Head of caudate nucleus (tissue), 42 donors: ENCODE measurements at regions of chr6 and their contacts with region 1.

Region 1: GRCh38 chr6:100479179-100480035 is 14.7 kb upstream of the SIM1 start:
- DNase-seq: peak in 2 of 42 donors; percentile 17 to 30

Region 2: DNA sequence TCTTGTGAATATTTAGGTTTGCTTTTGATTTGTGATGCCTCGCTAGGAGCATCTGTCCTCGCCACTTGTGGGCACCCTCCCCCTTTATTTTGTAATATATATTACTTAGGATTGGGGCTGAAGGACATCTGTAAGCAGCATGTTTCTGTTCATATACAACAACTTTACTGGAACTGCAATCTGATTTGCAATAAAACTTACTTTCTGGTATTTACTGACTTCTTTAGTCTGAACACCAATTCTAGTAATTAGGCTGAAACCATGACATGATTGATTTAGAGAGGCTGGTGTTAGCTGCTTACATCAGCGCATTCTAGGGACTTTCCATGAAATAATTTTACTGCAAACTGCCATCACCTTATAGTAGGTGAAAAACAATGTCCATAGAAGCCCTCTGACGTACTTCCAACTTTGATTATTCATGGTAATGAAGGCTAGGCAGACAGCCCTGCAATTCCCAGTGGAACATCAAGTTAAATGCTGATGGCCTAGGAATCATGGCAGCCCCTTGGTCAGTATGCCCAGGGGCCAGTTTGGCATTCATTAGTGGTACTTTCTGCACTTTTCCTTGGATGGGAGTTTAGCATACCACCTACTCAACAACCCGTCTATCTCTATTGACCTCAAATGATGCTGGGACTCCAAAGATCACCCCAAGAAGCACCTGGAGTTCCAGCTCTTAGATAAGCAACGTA is 352.5 kb before region 1 on chr6:
- intact Hi-C with region 1: loop called (anchors 5 kb)
- DNase-seq: no peak

Region 3: DNA sequence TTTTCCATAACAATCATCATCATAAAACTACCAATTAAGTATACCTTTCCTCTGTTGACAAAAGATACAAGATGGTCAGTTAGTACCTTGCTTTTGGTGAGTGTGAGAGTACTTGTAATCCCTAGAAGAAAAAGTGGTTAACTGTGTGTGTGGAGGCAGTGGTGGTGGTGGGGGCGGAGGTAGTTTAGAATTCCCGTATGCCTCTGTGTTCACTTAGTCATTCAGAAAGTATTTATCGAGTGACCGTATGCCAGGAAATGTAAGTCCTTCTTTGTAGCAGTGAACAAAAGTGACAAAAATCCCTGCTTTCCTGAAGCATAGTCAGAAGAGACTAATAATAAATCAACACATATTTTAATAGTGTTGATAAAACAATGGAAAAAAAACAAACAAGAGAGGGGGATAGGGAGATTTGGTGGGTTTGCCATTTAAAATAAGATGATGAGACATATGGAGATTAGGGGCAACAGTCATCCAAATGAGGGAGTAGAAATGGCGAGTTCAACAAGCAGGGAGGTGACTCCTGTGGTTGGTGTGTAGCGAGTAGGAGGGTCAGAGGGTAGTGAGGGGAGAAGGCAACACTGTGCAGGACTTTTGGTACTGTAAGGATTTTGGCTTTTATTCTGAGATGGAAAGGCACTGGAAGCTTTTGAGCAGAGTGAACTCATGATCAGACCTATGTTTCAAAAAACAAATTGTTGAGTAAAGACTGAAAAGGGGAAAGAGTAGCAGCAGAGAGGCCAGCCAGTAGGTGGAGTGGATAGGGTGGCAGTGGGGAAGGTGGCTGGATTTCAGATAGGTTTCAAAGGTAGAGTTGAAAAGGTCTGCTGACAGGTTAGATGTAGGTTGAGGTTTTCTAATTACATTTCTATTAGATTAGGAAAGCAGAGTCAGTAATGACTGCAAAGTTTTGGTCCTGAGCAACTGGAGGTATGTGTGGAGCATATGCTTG is 25.7 kb after region 1 on chr6:
- intact Hi-C with region 1: no loop called
- DNase-seq: no peak